PC-9 (cell line): ENCODE measurements at regions of chr1 and their contacts with region 1.

Region 1: DNA sequence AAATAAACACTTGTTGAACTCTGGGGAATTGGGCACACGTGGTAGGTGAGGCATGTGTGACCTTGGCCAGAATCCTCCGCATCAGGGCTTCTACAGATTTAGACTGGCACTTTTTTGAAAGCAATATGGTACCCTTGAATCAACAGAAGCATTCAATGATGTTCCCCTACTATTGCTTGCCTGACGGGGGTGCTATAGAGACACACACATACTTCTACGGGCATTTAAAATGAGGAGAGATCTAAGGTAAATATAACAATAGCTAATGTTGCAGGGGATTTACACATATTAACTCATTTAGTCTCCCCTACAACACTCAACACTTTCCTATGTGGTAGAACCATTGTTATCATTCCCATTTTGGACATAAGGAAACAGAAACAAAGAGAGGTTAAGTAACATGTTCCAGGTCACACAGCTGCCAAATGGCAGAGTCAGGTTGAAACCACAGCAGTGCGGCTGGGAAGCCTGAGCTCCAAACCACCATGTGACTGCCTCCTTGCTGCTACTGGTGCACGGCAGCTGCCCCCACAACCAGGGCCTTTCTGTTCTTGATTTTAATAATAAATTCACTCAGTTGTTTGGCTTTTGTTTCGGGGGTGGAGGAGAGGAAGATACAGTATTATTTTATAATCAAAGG is 147.4 kb downstream of the ZNF281 start:
- DNase-seq: no peak
- H3K4me3 ChIP-seq: no peak overlapping the region
- H3K27ac ChIP-seq: no peak overlapping the region
- H3K4me1 ChIP-seq: peaks cover 8% of the 10 kb centered on the region; the same call in 1 of the 2 replicates
- H3K27me3 ChIP-seq: no peaks in the 10 kb centered on the region
- CTCF ChIP-seq: no peak

Region 2: DNA sequence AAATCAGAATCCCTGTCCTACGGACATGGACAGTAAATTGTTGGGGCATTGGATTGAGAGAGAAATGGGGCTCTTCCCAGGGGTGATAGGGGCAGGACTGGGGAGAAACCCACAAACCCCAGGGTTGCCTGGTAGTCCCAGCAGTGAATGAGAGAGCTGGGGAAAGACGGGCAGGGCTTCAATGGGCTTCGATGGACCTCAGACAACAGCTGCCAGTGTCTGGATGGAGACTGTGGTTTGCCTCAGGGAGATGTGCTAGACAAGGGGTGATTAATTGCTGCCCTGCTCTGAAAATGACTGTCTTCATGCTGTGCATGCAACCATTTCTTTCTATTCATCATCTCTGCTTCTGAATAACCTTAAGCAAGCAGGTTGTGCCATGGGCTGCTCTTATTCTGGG is 617.8 kb after region 1 on chr1:
- CTCF ChIA-PET with region 1: no interaction called
- POLR2A ChIA-PET with region 1: no interaction called
- intact Hi-C with region 1: loop called (anchors 5 kb)
- DNase-seq: no peak
- H3K4me3 ChIP-seq: no peak overlapping the region
- H3K27ac ChIP-seq: no peak overlapping the region
- H3K4me1 ChIP-seq: no peaks in the 10 kb centered on the region
- H3K27me3 ChIP-seq: no peaks in the 10 kb centered on the region
- CTCF ChIP-seq: no peak